ENCODE measurements at regions of chr9 and their contacts with region 1.

Region 1: DNA sequence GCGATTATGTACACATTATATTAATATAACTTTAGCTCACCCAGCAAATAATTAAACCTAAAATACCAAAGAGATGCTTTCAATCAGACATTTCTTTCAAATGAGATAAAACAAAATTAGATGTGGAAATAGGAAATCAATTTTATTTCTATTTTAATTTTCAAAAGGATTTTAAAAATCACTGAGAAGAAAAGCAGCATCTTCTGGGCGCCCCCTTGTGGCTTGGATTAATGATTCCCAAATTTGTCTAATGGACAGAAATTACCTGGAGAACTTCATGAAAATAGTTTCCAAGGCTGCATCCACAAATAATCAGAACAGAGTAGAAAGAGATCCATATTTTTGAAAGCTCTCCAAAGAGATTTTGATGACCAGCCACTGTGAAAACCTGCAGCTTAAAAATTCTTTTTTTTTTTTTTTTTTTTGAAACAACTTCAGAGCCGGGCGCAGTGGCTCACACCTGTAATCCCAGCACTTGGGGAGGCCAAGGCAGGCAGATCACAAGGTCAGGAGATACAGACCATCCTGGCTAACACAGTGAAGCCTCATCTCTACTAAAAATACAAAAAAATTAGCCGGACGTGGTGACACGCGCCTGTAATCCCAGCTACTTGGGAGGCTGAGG is 50.9 kb upstream of the CEMIP2 start:
- DNase-seq: peak; percentile 23
- H3K4me3 Mint-ChIP-seq: no peak overlapping the region
- H3K27ac Mint-ChIP-seq: no peak overlapping the region
- H3K4me1 Mint-ChIP-seq: peaks cover 12% of the 10 kb centered on the region
- H3K27me3 Mint-ChIP-seq: no peaks in the 10 kb centered on the region

Region 2: DNA sequence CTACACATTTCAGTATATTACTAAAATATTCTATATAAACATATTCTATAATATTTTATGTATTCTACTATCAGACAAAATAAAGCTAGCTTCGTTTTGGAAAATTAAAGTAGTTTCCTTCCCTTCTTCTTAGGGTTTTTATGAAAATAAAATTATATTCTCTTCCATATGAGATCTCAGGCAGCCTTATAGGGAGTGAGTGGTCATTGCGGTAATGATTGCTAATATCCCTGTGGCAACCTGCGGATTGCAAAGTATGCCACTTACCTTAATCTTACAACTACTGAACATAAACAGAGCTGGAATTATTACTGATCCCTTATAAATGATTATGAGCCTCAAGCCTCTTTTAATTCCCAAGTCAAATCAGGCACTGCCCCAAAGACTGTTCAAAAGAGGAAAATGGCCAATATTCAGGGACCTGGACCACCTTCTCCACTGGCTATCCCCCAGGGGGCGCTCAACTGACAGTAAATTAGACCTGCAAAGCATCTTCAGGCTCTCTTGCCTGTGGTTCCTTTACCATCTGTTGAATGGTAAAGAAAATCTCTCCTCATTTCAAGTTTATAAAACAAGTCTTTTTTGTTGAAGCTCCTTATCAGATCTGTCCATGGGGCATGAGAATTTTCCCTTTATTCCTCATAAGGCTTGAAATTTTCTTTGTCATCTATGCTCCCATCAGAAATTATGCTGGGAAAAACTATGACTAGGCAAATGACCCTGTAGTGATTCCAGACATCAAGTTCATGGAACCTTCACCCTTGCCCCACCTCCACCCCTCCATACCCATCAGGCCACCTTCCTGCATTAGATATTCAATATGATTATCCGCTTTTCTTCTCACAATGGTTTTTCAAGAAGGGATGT is 214.8 kb before region 1 on chr9:
- CTCF ChIA-PET with region 1: interaction called, 9 read pairs
- POLR2A ChIA-PET with region 1: no interaction called
- intact Hi-C with region 1: loop called (anchors 2 kb)
- DNase-seq: peak; percentile 84
- H3K4me3 Mint-ChIP-seq: no peak overlapping the region
- H3K27ac Mint-ChIP-seq: no peak overlapping the region
- H3K4me1 Mint-ChIP-seq: no peaks in the 10 kb centered on the region
- H3K27me3 Mint-ChIP-seq: no peaks in the 10 kb centered on the region

Region 3: DNA sequence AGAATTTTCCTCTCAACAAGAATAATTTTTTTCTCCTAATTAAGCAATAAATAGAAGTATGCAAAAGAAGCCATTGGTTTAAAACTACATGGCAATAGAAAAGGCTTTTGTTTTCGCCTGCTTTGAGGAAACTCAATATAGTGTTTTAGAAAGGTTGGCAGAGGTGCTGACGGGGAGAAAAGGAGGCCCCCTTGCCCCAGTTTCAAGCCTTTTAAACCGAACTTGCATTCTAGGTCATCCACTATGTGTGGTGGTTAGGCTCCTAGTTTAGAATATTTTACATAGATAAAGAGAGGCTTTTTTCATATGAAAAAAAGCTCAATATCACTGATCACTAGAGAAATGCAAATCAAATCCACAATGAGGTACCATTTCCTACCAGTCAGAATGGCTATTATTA is 17.4 kb before region 1 on chr9:
- CTCF ChIA-PET with region 1: interaction called, 38 read pairs
- POLR2A ChIA-PET with region 1: no interaction called
- intact Hi-C with region 1: no loop called
- DNase-seq: no peak
- H3K4me3 Mint-ChIP-seq: no peak overlapping the region
- H3K27ac Mint-ChIP-seq: no peak overlapping the region
- H3K4me1 Mint-ChIP-seq: peaks cover 7% of the 10 kb centered on the region
- H3K27me3 Mint-ChIP-seq: no peaks in the 10 kb centered on the region

Region 4: DNA sequence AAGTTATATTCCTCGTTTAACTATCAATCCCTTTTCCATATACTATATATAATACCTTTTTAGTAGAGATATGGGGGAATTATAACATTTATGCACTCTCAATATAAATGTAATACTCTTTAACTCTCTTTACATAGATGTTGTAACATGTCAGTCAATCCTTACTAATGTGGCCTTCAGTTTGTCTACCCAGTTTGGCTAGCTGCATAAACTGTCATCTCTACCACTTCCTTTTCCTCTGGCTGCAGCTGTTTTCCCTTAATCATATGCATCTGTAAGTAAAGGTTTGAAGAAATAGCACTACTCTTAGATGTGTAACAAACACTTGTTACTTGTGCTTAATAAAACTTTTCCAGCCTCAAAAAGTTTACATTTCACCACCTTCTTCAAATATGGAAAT is 78.3 kb after region 1 on chr9:
- CTCF ChIA-PET with region 1: interaction called, 3 read pairs
- POLR2A ChIA-PET with region 1: no interaction called
- intact Hi-C with region 1: loop called (anchors 5 kb)
- DNase-seq: no peak
- H3K4me3 Mint-ChIP-seq: no peak overlapping the region
- H3K27ac Mint-ChIP-seq: no peak overlapping the region
- H3K4me1 Mint-ChIP-seq: peaks cover 61% of the 10 kb centered on the region
- H3K27me3 Mint-ChIP-seq: no peaks in the 10 kb centered on the region

Region 5: DNA sequence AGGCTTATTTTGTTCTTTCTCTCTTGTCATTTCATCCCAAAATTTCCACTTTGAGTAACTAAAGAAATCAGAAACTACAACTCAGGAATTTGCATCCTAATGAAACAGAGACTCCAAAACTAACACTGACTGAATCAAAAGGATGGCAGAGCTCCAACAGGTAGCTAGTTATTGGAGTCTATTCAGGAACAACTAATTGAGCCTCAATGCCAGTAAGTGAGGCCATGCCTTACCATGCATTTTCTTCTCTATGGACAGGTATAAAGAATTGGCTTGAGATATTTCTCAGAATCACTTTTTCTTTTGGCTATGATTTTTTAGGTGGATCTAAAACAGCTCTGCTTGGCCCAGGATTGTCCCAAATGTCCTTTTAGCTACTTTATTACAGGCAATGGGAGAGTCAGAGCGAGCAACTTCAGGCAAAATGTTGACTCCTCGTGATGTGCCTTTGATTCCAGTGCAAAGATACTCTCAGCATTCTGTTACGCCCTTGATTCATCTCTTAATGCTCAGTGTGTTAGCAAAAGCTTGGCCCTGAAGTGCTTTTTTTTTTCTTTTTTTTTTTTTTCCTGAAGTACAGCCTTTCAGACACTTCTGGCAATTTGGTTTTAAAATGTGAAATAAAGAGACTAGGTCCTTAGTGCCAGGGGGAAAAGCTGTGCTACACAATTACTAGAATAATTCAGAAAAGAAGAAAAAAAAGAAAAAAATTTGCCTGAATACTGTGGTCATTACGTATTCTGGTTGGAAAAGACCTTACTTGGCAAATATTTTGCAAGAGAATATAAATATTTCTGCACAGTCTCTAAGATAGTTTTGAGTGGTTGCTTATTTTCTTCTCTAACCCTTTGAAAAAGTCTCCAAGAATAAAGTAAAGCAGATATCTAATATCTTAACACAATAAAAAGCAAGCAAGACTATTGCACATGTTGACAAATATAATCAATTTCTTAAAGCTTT is 1756.2 kb after region 1 on chr9:
- CTCF ChIA-PET with region 1: no interaction called
- POLR2A ChIA-PET with region 1: no interaction called
- intact Hi-C with region 1: no loop called
- DNase-seq: no peak
- H3K4me3 Mint-ChIP-seq: no peak overlapping the region
- H3K27ac Mint-ChIP-seq: no peak overlapping the region
- H3K4me1 Mint-ChIP-seq: no peaks in the 10 kb centered on the region
- H3K27me3 Mint-ChIP-seq: no peaks in the 10 kb centered on the region